PC-9 (cell line): ENCODE measurements at regions of chr5 and their contacts with region 1.

Region 1: DNA sequence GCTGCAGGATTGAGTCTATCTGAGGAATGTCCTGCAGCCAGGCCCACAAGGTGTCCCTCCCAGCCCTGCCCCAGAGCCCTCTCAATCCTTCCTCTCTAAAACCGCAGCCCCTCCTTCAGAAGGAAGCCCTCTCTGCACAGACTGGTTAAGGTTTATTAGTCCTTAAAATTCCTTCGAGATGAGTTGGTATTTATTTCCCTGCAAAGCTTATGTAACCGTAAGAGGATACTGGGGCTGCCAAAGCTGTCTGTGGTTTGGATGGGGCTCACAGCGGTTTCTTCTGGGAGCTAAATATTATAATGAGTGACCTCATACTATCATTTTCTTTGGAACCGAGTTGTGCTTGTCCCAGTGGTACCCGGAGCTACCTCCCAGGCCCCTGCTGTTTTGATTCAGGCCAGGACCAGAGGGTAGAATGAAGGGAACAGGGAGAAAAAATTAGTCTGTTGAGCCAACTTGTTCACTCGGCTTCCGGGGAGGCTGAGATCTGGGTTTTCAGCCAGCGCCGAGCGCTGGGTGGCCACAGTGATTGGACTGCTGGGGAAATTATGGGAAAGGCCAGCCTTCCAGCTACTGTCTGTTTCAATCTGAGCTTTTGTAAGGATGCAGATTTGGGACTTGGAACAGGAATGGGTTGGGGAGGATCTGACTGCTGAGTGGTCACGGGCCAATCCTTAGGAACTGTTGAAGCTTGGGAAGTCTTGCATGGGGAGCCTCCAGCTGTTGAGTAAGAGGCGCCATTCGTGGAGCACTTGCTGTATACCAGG is 107.5 kb downstream of the NDFIP1 start:
- DNase-seq: peak; percentile 83 to 99
- H3K4me3 ChIP-seq: peak overlapping the region; percentile 34; the same call in 1 of the 2 replicates
- H3K27ac ChIP-seq: peak overlapping the region; percentile 62
- H3K4me1 ChIP-seq: peaks cover 41% of the 10 kb centered on the region
- H3K27me3 ChIP-seq: no peaks in the 10 kb centered on the region
- CTCF ChIP-seq: no peak

Region 2: DNA sequence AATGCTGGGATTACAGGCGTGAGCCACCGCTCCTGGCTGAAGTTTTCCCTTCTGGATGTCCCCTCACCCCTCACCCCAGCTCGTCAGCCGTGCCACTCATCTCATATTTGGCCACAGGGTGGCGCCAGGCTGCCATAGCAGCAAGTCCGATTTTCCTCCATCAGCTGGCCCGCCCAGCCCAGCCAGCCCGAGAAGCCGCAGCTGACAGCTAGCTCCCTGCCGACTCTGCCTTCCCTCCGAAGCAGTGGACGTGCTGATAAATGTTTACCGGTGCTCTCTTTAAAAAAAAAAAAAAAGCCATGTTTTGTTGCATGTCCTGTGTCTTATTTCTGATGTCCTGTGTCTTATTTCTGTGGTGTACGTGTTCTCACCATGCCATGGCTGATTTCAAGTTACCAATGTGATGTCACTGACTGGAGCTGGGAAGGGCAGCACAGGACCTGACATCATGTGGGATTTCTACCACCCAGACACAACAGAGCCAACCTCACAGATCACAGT is 1971.5 kb before region 1 on chr5:
- CTCF ChIA-PET with region 1: no interaction called
- POLR2A ChIA-PET with region 1: interaction called, 11 read pairs
- intact Hi-C with region 1: no loop called
- DNase-seq: peak; percentile 77 to 82
- H3K4me3 ChIP-seq: no peak overlapping the region
- H3K27ac ChIP-seq: no peak overlapping the region
- H3K4me1 ChIP-seq: peaks cover 45% of the 10 kb centered on the region
- H3K27me3 ChIP-seq: no peaks in the 10 kb centered on the region
- CTCF ChIP-seq: peak; percentile 91

Region 3: DNA sequence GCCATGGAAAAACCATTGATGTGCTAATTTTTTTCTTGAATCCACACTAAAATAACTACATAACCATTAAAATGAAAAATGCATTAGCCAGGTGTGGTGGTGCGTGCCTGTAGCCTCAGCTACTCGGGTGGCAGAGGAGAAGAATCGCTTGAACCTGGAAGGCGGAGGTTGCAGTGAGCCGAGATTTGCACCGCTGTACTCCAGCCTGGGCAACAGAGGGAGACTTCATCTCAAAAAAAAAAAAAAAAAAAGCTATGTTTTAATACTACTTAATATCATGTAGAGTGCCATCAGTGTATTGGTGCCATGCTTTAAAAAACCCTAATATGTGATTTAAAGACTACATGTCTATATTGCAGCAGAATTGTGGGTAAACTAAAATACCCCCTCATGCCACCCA is 48.6 kb before region 1 on chr5:
- CTCF ChIA-PET with region 1: no interaction called
- POLR2A ChIA-PET with region 1: no interaction called
- intact Hi-C with region 1: loop called (anchors 5 kb)
- DNase-seq: no peak
- H3K4me3 ChIP-seq: no peak overlapping the region
- H3K27ac ChIP-seq: no peak overlapping the region
- H3K4me1 ChIP-seq: peaks cover 29% of the 10 kb centered on the region
- H3K27me3 ChIP-seq: no peaks in the 10 kb centered on the region
- CTCF ChIP-seq: peak; percentile 31; the same call in 1 of the 2 replicates

Region 4: GRCh38 chr5:142275496-142275895 is 59.4 kb after region 1 on chr5:
- CTCF ChIA-PET with region 1: no interaction called
- POLR2A ChIA-PET with region 1: no interaction called
- intact Hi-C with region 1: loop called (anchors 5 kb)
- DNase-seq: peak; percentile 69 to 85
- H3K4me3 ChIP-seq: no peak overlapping the region
- H3K27ac ChIP-seq: no peak overlapping the region; the same call in 1 of the 2 replicates
- H3K4me1 ChIP-seq: peaks cover 39% of the 10 kb centered on the region
- H3K27me3 ChIP-seq: no peaks in the 10 kb centered on the region
- CTCF ChIP-seq: no peak

Region 5: DNA sequence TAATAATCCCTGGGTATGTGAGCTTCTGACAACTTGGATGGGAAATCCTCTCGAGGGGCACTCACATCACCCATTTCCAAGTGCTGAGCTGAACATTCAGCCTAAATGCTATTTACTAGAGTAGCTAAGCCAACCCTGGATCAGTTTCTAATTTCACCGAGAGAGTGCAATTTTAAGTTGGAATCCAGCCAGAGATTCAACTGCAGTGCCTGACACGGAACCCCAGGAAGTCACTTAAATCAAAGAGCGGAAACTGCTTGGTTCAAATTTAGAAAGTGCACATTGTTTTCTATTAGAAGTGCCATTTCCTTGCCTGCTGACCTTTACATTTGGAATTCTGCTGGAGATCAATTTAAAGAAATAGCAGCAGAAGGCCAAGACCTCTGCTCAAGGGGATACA is 100.0 kb after region 1 on chr5:
- CTCF ChIA-PET with region 1: interaction called, 10 read pairs
- POLR2A ChIA-PET with region 1: no interaction called
- intact Hi-C with region 1: no loop called
- DNase-seq: no peak
- H3K4me3 ChIP-seq: no peak overlapping the region
- H3K27ac ChIP-seq: no peak overlapping the region; the same call in 1 of the 2 replicates
- H3K4me1 ChIP-seq: peaks cover 36% of the 10 kb centered on the region
- H3K27me3 ChIP-seq: no peaks in the 10 kb centered on the region
- CTCF ChIP-seq: no peak